H1 (cell line): ENCODE measurements at regions of chr18 and their contacts with region 1.

Region 1: DNA sequence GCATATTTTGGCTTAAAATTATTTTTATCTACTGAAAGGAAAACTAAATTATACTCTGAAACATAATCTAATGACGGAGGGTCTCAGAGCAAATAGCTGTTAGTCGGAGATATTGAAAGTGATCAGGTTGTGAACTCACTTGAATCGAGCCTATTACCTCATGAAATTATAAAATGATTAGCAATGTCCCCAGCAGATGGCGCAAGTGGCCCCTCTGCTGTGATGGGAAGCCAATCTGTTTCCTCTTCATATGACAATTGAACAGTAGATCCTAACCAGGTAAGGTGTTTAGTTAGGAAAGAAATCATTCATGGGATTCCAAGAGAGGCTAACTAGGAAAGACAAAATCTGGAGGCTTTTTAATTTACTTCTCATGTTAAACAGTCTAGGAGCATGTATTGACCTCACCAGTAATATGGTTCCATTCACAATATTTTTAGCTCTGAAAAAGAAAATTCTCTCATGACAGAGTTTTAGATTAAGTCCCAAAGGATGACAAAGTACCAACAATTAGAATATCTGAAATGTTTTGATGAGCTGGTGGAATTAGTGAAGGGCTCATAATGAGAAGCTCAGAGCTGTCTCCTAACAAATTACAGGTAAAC is 29.9 kb upstream of the MPPE1 start:
- DNase-seq: peak in 1 of 2 experiments; percentile 84
- H3K4me3 ChIP-seq: no peak overlapping the region
- H3K27ac ChIP-seq: no peak overlapping the region
- H3K4me1 ChIP-seq: no peaks in the 10 kb centered on the region
- H3K27me3 ChIP-seq: no peaks in the 10 kb centered on the region
- CTCF ChIP-seq: peak; percentile 57 to 83 (median 73)
- EP300 ChIP-seq: no peak
- POLR2A ChIP-seq: no peak
- RAD21 ChIP-seq: peak; percentile 87 to 89

Region 2: DNA sequence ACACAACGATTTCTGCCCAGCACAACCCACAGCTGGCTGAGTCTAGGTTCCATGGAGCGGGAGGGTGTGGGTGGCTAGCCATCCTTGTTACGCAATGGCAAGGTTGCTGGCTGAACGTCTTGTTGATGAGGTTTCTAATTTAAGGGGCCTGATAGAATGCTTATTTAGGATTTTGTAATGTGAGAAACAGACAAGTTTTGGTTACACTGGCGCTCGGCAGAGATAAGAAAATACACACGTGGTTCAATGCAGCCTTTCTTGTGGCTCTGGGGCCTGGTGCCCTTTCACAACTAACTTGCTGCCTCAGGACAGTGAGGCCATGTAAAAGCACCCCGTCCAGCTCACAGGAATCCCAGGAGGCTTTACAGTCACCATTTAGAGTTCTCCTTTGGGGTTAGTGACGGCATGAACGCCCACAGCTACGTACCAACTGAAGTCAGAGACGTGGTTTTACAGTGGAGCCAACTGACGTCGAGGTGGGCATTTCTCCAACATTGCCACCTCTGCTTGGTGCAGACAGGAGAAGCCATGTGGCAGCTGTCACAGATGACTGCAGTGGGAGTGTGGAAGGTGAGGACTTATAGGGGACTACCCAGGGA is 758.9 kb before region 1 on chr18:
- CTCF ChIA-PET with region 1: no interaction called
- POLR2A ChIA-PET with region 1: no interaction called
- DNase-seq: no peak
- H3K4me3 ChIP-seq: no peak overlapping the region
- H3K27ac ChIP-seq: no peak overlapping the region
- H3K4me1 ChIP-seq: no peaks in the 10 kb centered on the region
- H3K27me3 ChIP-seq: no peaks in the 10 kb centered on the region
- CTCF ChIP-seq: no peak
- EP300 ChIP-seq: no peak
- POLR2A ChIP-seq: no peak
- RAD21 ChIP-seq: no peak

Region 3: DNA sequence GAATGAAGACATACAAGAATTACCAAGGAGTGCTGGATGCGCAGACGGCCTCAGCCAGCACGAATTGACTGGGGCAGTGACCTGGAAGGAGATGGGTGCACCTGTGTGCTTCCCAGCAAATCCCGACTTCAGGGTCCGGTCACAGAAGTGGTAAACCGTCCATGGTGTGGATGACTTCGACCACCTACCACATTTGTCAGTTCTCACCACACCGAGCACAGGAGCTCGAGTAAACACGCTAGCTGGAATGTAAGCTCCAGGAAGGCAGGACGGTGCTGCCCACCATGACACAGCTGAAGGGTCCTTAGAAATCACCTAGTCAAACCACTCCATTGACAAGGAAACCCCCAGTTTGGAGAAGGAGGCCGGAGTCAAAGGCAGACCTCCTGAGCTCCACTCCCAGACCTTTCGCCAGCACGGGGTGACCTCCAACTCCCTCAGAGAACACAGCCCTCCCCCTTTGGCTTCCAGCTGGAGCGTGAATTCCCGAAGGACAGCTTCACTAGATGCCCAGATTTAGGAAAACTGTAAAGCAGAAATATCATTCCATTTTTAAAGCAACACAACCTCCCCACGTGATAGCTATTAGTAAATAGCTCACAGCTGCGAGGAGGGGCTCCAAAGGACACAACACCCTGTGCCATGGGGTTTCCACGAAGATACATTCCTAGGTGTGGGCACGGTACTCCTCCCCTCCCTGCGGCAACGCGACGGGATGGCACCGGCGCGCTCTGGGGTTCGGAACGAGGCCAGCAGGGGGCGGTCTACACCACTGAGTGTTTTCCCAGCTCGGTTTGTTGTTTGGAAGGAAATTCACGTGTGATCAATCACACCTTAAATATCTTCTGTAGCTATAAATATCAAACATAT is 283.0 kb before region 1 on chr18:
- CTCF ChIA-PET with region 1: interaction called, 12 read pairs
- POLR2A ChIA-PET with region 1: no interaction called
- DNase-seq: peak; percentile 13 to 94
- H3K4me3 ChIP-seq: peak overlapping the region in 2 of 4 experiments; percentile 10 to 35; a peak in 3 of 8 replicates
- H3K27ac ChIP-seq: no peak overlapping the region
- H3K4me1 ChIP-seq: no peaks in the 10 kb centered on the region
- H3K27me3 ChIP-seq: peaks cover 0 to 8% (median 3%) of the 10 kb centered on the region in 4 experiments; a peak in 4 of 7 replicates
- CTCF ChIP-seq: peak; percentile 84 to 96 (median 88)
- EP300 ChIP-seq: no peak
- POLR2A ChIP-seq: no peak
- RAD21 ChIP-seq: peak; percentile 90 to 92

Region 4: GRCh38 chr18:11871501-11871900 is 66.5 kb before region 1 on chr18:
- CTCF ChIA-PET with region 1: no interaction called
- POLR2A ChIA-PET with region 1: no interaction called
- DNase-seq: no peak
- H3K4me3 ChIP-seq: no peak overlapping the region
- H3K27ac ChIP-seq: no peak overlapping the region
- H3K4me1 ChIP-seq: peaks cover 0 to 3% (median 0%) of the 10 kb centered on the region in 4 experiments; a peak in 2 of 7 replicates
- H3K27me3 ChIP-seq: no peaks in the 10 kb centered on the region
- CTCF ChIP-seq: no peak
- EP300 ChIP-seq: no peak
- POLR2A ChIP-seq: no peak
- RAD21 ChIP-seq: no peak

Region 5: DNA sequence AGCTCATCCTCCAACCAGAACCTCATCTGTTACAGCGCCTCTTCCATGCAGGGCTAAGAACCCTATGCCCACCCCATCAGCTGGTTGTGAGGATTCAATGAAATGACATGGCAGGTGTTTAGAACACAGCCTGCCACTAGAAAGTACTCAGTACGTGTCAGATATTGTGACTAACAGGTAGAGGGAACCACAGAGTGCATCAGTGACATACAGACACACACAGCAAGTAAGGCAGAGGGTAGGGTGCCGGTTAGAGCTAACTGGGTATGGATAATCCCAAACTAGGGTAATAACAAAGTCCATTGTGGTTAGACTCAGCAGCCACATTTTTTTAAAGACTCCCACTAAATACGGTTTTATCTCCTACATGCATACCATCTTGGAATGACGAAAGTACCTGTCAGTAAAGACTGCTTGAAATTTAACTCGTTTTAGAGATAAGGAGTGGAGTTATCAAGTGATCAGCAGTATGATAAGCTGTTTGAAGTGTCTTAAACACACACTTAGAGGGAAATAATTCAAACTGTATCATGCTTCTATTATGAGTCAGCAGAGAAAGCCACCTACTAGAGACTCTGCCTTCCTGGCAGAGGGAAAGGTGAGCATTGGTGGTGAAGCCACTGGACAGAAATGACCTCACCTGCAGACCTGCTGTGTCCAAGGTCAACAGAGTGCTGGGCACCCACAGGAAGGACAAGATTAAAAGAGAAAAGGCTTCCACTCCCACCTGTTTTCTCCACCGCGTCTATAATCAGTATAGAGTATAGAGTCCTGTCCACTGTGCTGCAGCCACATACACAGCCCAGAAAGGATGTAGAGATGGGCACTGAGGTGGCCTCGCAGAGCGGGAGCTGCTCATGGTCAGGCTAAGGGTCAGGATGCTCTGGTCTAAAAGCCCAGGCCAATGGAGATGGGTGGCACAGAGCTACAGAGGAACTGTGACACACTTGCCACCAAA is 50.4 kb before region 1 on chr18:
- CTCF ChIA-PET with region 1: interaction called, 11 read pairs
- POLR2A ChIA-PET with region 1: interaction called, 3 read pairs
- DNase-seq: no peak
- H3K4me3 ChIP-seq: no peak overlapping the region
- H3K27ac ChIP-seq: no peak overlapping the region
- H3K4me1 ChIP-seq: peaks cover 0 to 4% (median 1%) of the 10 kb centered on the region in 4 experiments; a peak in 2 of 7 replicates
- H3K27me3 ChIP-seq: no peaks in the 10 kb centered on the region
- CTCF ChIP-seq: no peak
- EP300 ChIP-seq: no peak
- POLR2A ChIP-seq: no peak
- RAD21 ChIP-seq: no peak

Region 6: DNA sequence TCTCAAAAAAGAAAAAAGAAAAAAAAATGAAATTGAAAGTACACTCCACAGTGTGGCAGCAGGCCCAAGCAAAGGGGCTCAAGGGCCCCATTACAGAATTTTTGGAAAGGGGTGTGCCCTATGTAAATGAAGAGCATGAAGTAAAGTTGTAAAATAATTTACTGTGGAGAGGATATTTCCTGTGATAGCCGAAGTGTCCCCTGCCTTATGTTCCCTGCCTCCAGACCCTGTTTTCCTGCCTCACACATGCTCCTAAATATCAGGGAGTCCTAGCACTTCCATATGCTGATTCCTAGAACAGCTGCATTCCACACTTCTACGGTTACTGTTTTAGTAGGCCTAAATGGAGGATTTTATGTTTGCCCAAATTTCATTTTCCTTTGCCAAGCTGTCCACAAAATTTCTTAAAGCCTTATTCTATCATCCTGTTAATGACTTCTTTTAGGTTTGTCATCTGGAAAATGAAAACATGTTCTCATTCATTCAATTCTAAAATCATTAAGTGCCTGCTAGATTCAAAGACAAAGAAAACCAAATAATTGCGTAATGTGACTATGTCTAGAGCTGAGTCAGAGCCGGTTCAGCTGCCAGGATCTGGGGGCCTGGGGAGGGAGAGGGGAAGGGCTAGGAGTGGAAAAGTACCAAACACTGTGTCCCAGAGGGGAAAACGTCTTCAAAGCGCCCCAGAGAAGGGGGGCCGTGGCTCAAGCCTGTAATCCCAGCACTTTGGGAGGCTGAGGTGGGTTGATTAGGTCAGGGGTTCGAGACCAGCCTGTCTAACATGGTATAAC is 17.5 kb after region 1 on chr18:
- CTCF ChIA-PET with region 1: interaction called, 99 read pairs
- POLR2A ChIA-PET with region 1: interaction called, 6 read pairs
- DNase-seq: no peak
- H3K4me3 ChIP-seq: no peak overlapping the region
- H3K27ac ChIP-seq: 0 out of 2 replicates have a peak overlapping the region, but pooled peaks have one; percentile 32
- H3K4me1 ChIP-seq: peaks cover 0 to 9% (median 5%) of the 10 kb centered on the region in 4 experiments; a peak in 5 of 7 replicates
- H3K27me3 ChIP-seq: no peaks in the 10 kb centered on the region
- CTCF ChIP-seq: no peak
- EP300 ChIP-seq: no peak
- POLR2A ChIP-seq: no peak
- RAD21 ChIP-seq: no peak; a peak in 1 of 4 replicates

Region 7: GRCh38 chr18:12005538-12006487 is 67.8 kb after region 1 on chr18:
- CTCF ChIA-PET with region 1: interaction called, 30 read pairs
- POLR2A ChIA-PET with region 1: no interaction called
- DNase-seq: no peak
- H3K4me3 ChIP-seq: no peak overlapping the region
- H3K27ac ChIP-seq: no peak overlapping the region
- H3K4me1 ChIP-seq: no peaks in the 10 kb centered on the region; a peak in 2 of 7 replicates
- H3K27me3 ChIP-seq: no peaks in the 10 kb centered on the region
- CTCF ChIP-seq: no peak
- EP300 ChIP-seq: no peak
- POLR2A ChIP-seq: no peak
- RAD21 ChIP-seq: no peak

Region 8: GRCh38 chr18:12031846-12032245 is 93.9 kb after region 1 on chr18:
- CTCF ChIA-PET with region 1: interaction called, 34 read pairs
- POLR2A ChIA-PET with region 1: no interaction called
- DNase-seq: peak in 1 of 2 experiments; percentile 3
- H3K4me3 ChIP-seq: no peak overlapping the region
- H3K27ac ChIP-seq: no peak overlapping the region
- H3K4me1 ChIP-seq: 0 out of 7 replicates have a peak, but pooled peaks cover 0 to 2% (median under 1%) of the 10 kb centered on the region in 4 experiments
- H3K27me3 ChIP-seq: no peaks in the 10 kb centered on the region
- CTCF ChIP-seq: no peak
- EP300 ChIP-seq: no peak
- POLR2A ChIP-seq: no peak
- RAD21 ChIP-seq: no peak